ENCODE measurements at regions of chr22 and their contacts with region 1.

Region 1: DNA sequence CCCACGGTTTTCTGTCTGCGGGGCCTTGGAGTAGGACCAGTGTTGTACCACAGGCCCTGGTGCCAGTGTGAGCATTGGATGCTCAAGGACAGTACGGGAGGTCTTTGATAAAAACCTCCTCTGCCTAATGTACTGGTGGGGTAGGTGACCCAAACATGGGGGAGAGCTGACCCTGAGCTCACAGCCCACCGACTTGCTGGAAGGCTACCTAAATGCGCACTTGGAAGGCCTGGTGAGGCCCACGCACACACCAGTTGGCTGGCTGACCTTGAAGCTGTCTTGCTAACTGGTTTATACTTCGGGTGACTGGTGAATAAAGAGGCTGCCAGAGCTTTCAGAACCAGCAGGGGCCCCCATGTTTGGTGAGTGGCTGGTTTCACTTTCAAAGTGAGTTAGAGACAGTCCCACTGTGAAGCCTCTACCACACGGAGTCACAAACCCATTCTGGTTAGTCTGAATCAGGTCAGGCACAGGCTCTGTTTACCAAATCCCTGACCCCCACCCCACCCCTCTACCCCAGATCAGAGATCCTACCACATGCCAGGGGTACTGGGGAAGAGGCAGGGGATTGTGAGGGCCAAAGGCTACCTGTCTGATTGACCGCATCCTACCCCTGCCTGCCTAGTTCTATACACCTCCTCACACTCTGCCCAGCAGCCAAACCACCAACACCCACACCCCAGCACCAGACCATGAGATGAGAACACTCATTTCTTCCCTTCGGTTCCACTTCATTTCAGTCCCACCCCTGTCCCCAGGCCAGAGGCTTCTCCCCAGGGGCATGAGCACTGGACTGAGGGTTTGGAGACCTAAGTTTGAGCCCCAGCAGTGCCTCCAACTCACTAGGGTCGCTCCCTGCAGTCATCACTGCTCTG is 12.7 kb upstream of the IL2RB start:
- DNase-seq: no peak
- H3K4me3 ChIP-seq: no peak overlapping the region
- H3K27ac ChIP-seq: no peak overlapping the region
- H3K4me1 ChIP-seq: peaks cover 10% of the 10 kb centered on the region
- H3K27me3 ChIP-seq: peaks cover 57% of the 10 kb centered on the region
- CTCF ChIP-seq: no peak

Region 2: GRCh38 chr22:37199760-37200108 is 37.3 kb after region 1 on chr22:
- intact Hi-C with region 1: loop called (anchors 5 kb)
- DNase-seq: no peak
- H3K4me3 ChIP-seq: peak overlapping the region; percentile 81
- H3K27ac ChIP-seq: peak overlapping the region; percentile 98
- H3K4me1 ChIP-seq: peaks cover 44% of the 10 kb centered on the region
- H3K27me3 ChIP-seq: no peaks in the 10 kb centered on the region
- CTCF ChIP-seq: peak; percentile 16

Region 3: DNA sequence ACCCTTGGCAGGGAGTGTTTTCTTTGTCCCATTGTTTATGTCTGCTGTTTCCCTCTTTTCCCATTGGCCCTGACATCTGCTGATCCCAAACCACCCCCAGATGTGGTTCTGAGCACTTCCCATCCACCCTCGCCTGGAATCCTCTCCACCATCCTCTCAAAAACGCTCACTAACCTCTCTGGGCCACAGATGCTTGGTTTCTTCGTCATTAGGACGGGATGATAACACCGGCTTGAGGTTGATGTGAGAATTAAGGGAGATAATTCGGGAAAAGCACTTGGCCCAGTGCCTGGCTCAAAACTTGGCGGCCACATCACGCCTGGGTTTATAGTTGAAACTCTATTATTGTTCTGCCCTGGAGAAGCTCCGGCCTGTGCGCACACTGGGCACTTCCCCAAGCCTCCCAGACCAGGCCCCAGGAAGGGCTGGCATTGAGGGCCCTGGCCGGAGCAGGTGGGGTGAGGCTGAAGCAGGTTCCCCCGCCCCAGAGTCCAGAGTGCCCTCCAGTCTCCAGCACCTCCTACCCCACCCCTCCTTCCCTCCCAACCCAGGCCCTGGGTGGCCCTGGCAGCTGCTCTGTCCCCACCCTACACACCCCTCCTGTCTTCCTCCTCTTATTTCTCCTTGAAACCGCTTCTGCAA is 183.5 kb after region 1 on chr22:
- intact Hi-C with region 1: no loop called
- DNase-seq: peak; percentile 31
- H3K4me3 ChIP-seq: no peak overlapping the region
- H3K27ac ChIP-seq: no peak overlapping the region
- H3K4me1 ChIP-seq: peaks cover 8% of the 10 kb centered on the region
- H3K27me3 ChIP-seq: peaks cover 56% of the 10 kb centered on the region
- CTCF ChIP-seq: no peak

Measured in left ventricle myocardium inferior (tissue), 1 donor.